Activated CD4-positive, alpha-beta T cell treated with anti-CD3 and anti-CD28 coated beads for 36 hours (primary cell): ENCODE measurements at regions of chr10 and their contacts with region 1.

Region 1: GRCh38 chr10:75137533-75138438 is 26.3 kb downstream of the SAMD8 start:
- DNase-seq: peak; percentile 66
- ATAC-seq: peak; percentile 94
- H3K4me3 Mint-ChIP-seq: no peak overlapping the region
- H3K27ac Mint-ChIP-seq: peak overlapping the region; percentile 67
- H3K4me1 Mint-ChIP-seq: peaks cover 37% of the 10 kb centered on the region
- H3K27me3 Mint-ChIP-seq: no peaks in the 10 kb centered on the region

Region 2: DNA sequence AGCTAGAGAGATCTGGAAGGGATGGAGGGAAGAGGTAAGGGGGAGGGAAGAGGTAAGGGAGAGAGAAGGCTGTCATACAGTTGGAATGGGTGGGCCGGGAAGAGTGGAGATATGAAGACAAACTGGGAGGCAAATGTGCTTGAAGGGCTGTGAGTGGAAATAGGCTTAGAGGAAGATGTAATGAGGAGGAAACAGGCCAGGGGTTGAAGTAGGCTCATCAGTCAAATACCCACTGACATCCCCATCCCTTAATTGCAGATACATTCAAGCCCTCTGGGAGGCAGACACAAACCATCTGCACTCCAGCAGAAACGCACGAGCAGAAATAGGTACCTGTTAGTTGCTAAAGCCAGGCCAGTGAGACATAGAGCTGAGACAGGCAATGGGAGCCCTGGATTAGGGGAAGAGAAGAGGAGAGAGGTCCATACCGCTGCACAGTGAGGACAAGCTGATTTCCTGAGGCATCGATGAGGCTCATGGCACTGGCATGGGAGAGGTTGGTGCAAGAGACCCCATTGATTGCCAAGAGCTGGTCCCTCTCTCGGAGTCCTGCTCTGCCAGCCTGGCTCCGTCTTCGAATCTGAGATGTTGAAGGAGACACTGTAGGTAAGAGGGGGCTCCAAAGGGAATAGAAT is 1484.0 kb before region 1 on chr10:
- CTCF ChIA-PET with region 1: no interaction called
- POLR2A ChIA-PET with region 1: no interaction called
- intact Hi-C with region 1: no loop called
- DNase-seq: no peak
- ATAC-seq: no peak
- H3K4me3 Mint-ChIP-seq: no peak overlapping the region
- H3K27ac Mint-ChIP-seq: no peak overlapping the region
- H3K4me1 Mint-ChIP-seq: peaks cover 2% of the 10 kb centered on the region
- H3K27me3 Mint-ChIP-seq: no peaks in the 10 kb centered on the region

Region 3: DNA sequence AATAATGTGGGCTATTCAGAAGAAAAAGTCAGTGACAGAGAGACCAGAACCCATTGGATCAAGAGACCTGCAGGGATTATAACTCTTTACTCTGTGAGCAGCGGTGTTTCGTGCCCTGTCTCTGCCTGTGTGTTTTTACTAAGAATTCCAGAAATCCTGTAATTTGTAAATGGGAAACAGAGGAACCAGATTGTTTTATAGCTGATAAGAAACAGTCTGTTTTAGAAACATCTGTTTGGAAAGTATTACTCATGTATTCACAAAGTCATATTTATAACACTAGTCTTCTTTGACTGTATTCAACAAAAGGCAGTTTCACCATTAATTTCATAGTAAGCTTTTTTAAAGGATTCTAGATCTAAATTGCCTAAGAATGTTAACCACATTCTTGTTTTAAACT is 42.8 kb after region 1 on chr10:
- CTCF ChIA-PET with region 1: no interaction called
- POLR2A ChIA-PET with region 1: no interaction called
- intact Hi-C with region 1: loop called (anchors 1 to 5 kb)
- DNase-seq: no peak
- ATAC-seq: peak; percentile 48
- H3K4me3 Mint-ChIP-seq: no peak overlapping the region
- H3K27ac Mint-ChIP-seq: peak overlapping the region; percentile 63
- H3K4me1 Mint-ChIP-seq: peaks cover 30% of the 10 kb centered on the region
- H3K27me3 Mint-ChIP-seq: no peaks in the 10 kb centered on the region